Stomach (tissue), 19 donors: ENCODE measurements at regions of chr1 and their contacts with region 1.

Region 1: GRCh38 chr1:2778220-2778592 is 23.3 kb downstream of the TTC34 start:
- DNase-seq: no peak
- H3K4me3 ChIP-seq: no peak overlapping the region
- H3K27ac ChIP-seq: no peak overlapping the region
- H3K4me1 ChIP-seq: no peaks in the 10 kb centered on the region
- H3K27me3 ChIP-seq: peaks cover 0 to 35% (median 0%) of the 10 kb centered on the region in 3 donors
- CTCF ChIP-seq: no peak
- EP300 ChIP-seq: no peak
- POLR2A ChIP-seq: no peak

Region 2: DNA sequence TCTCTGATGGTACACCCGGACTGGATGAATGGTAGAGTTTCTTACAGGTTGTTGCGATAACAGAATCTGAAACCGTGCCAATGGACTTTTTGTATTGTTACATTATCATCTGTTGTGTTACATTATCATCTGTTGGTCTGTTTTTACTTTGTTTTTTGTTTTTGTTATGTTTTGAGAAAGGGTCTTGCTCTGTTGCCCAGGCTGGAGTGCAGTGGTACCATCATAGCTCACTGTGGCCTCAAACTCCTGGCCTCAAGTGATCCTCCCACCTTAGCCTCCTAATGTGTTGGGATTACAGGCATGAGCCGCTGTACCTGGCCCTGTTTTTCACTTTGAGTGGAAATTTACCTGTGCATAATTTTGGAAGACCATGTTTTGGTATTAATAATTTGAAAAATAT is 355.7 kb before region 1 on chr1:
- intact Hi-C with region 1: loop called (anchors 5 kb)
- DNase-seq: no peak
- H3K4me3 ChIP-seq: no peak overlapping the region
- H3K27ac ChIP-seq: no peak overlapping the region
- H3K4me1 ChIP-seq: no peaks in the 10 kb centered on the region
- H3K27me3 ChIP-seq: peaks cover 0 to 63% (median 36%) of the 10 kb centered on the region in 3 donors
- CTCF ChIP-seq: no peak
- EP300 ChIP-seq: no peak
- POLR2A ChIP-seq: no peak